ENCODE measurements at regions of chr11 and their contacts with region 1.

Region 1: GRCh38 chr11:66126808-66127555 is 56.9 kb downstream of the PACS1 start:
- H3K4me3 Mint-ChIP-seq: peak overlapping the region; percentile 59
- H3K27ac Mint-ChIP-seq: peak overlapping the region; percentile 90
- H3K4me1 Mint-ChIP-seq: peaks cover 45% of the 10 kb centered on the region
- H3K27me3 Mint-ChIP-seq: no peaks in the 10 kb centered on the region

Region 2: GRCh38 chr11:66069715-66070603 is 57.0 kb before region 1 on chr11 and contains the start of gene PACS1:
- intact Hi-C with region 1: loop called (anchors 2 kb)
- H3K4me3 Mint-ChIP-seq: peak within 1 kb of the TSS; percentile 89
- H3K27ac Mint-ChIP-seq: peak within 1 kb of the TSS; percentile 96
- H3K4me1 Mint-ChIP-seq: peaks cover 63% of the 10 kb centered on the region
- H3K27me3 Mint-ChIP-seq: no peaks in the 10 kb centered on the region

Region 3: GRCh38 chr11:66081505-66081904 is 45.5 kb before region 1 on chr11:
- intact Hi-C with region 1: loop called (anchors 5 kb)
- H3K4me3 Mint-ChIP-seq: peak overlapping the region; percentile 44
- H3K27ac Mint-ChIP-seq: peak overlapping the region; percentile 84
- H3K4me1 Mint-ChIP-seq: peaks cover 62% of the 10 kb centered on the region
- H3K27me3 Mint-ChIP-seq: no peaks in the 10 kb centered on the region

Region 4: GRCh38 chr11:66112601-66113098 is 14.3 kb before region 1 on chr11:
- intact Hi-C with region 1: loop called (anchors 2 kb)
- H3K4me3 Mint-ChIP-seq: peak overlapping the region; percentile 55
- H3K27ac Mint-ChIP-seq: peak overlapping the region; percentile 79
- H3K4me1 Mint-ChIP-seq: peaks cover 67% of the 10 kb centered on the region
- H3K27me3 Mint-ChIP-seq: no peaks in the 10 kb centered on the region

Region 5: GRCh38 chr11:66157179-66157864 is 30.3 kb after region 1 on chr11:
- intact Hi-C with region 1: no loop called
- H3K4me3 Mint-ChIP-seq: no peak overlapping the region
- H3K27ac Mint-ChIP-seq: no peak overlapping the region
- H3K4me1 Mint-ChIP-seq: no peaks in the 10 kb centered on the region
- H3K27me3 Mint-ChIP-seq: no peaks in the 10 kb centered on the region

Measured in dendritic cell treated with granulocyte-macrophage colony-stimulating factor and Interleukin-4, amounts not matched to agents 40 ng/mL and 50 ng/mL, for 4 days (primary cell).